Natural killer cell (primary cell): ENCODE measurements at regions of chr16 and their contacts with region 1.

Region 1: GRCh38 chr16:77211880-77212740 is 12.9 kb downstream of the SYCE1L start:
- DNase-seq: peak; percentile 67 to 85
- ATAC-seq: peak; percentile 83 to 88 (median 84)
- H3K4me3 ChIP-seq: peak overlapping the region; percentile 86
- H3K4me3 Mint-ChIP-seq: peak overlapping the region; percentile 88
- H3K27ac ChIP-seq: peak overlapping the region; percentile 74
- H3K27ac Mint-ChIP-seq: peak overlapping the region in 1 of 2 donors; percentile 88
- H3K4me1 ChIP-seq: peaks cover 15% of the 10 kb centered on the region
- H3K4me1 Mint-ChIP-seq: peaks cover 0 to 20% of the 10 kb centered on the region in 2 donors
- H3K27me3 ChIP-seq: no peaks in the 10 kb centered on the region
- H3K27me3 Mint-ChIP-seq: no peaks in the 10 kb centered on the region
- CTCF ChIP-seq: no peak

Region 2: GRCh38 chr16:77190478-77191258 is 21.4 kb before region 1 on chr16 and contains the start of gene MON1B:
- intact Hi-C with region 1: loop called (anchors 1 kb)
- DNase-seq: peak; percentile 92 to 98
- ATAC-seq: peak; percentile 91 to 98 (median 92)
- H3K4me3 ChIP-seq: peak within 1 kb of the TSS; percentile 72
- H3K4me3 Mint-ChIP-seq: peak within 1 kb of the TSS; percentile 98
- H3K27ac ChIP-seq: peak within 1 kb of the TSS; percentile 91
- H3K27ac Mint-ChIP-seq: peak within 1 kb of the TSS; percentile 94 to 100
- H3K4me1 ChIP-seq: peaks cover 17% of the 10 kb centered on the region
- H3K4me1 Mint-ChIP-seq: peaks cover 46 to 54% of the 10 kb centered on the region in 2 donors
- H3K27me3 ChIP-seq: no peaks in the 10 kb centered on the region
- H3K27me3 Mint-ChIP-seq: peaks cover 4 to 6% of the 10 kb centered on the region in 2 donors
- CTCF ChIP-seq: no peak
- total RNA-seq, gene MON1B: 88.6 to 97.8 (median 91.1) TPM

Region 3: DNA sequence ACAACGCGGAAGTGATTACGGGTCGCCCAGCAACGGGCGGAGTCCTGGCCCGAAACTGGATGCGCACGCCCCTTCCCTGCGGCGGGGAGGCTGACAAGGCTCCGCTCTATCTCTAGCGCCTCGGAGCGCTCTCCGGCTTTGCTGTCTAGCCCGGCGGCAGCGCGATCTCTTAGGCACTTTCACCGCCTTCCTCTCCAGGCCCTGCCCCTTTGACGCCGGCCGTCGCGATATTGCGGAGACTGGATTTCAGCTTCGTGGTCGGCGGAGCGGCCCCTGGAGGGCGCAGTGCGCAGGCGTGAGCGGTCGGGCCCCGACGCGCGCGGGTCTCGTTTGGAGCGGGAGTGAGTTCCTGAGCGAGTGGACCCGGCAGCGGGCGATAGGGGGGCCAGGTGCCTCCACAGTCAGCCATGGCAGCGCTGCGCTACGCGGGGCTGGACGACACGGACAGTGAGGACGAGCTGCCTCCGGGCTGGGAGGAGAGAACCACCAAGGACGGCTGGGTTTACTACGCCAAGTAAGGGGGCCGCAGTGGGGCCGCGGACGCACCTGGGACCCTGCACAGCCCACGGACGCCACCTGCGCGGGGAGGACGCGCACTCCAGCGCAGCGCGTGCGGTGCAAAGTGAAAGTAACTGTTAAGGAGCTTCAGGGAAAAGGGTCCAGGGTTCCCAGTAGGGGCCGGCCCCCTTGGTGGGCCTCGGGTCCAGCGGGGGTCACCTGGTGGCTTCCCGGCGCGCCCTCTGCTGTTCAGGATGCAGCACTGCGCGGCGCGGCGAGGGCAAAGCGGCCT is 887.5 kb after region 1 on chr16 and contains the start of gene WWOX:
- intact Hi-C with region 1: loop called (anchors 5 kb)
- DNase-seq: peak; percentile 92 to 98
- ATAC-seq: peak; percentile 93 to 98 (median 94)
- H3K4me3 ChIP-seq: peak within 1 kb of the TSS; percentile 80
- H3K4me3 Mint-ChIP-seq: peak within 1 kb of the TSS; percentile 95
- H3K27ac ChIP-seq: peak within 1 kb of the TSS; percentile 86
- H3K27ac Mint-ChIP-seq: peak within 1 kb of the TSS; percentile 93
- H3K4me1 ChIP-seq: peaks cover 11% of the 10 kb centered on the region
- H3K4me1 Mint-ChIP-seq: peaks cover 12 to 26% of the 10 kb centered on the region in 2 donors
- H3K27me3 ChIP-seq: no peaks in the 10 kb centered on the region
- H3K27me3 Mint-ChIP-seq: peaks cover 7 to 11% of the 10 kb centered on the region in 2 donors
- CTCF ChIP-seq: peak; percentile 96
- total RNA-seq, gene WWOX: 21.0 to 29.8 (median 27.0) TPM